Naive thymus-derived CD4-positive, alpha-beta T cell (primary cell): ENCODE measurements at regions of chr12 and their contacts with region 1.

Region 1: GRCh38 chr12:65556681-65557437 is 267.4 kb upstream of the HMGA2 start:
- DNase-seq: peak; percentile 4 to 59 (median 47)
- ATAC-seq: peak; percentile 86
- H3K4me3 ChIP-seq: no peak overlapping the region
- H3K4me3 Mint-ChIP-seq: no peak overlapping the region
- H3K27ac ChIP-seq: no peak overlapping the region
- H3K27ac Mint-ChIP-seq: no peak overlapping the region
- H3K4me1 ChIP-seq: no peaks in the 10 kb centered on the region
- H3K4me1 Mint-ChIP-seq: peaks cover 0 to 8% (median 6%) of the 10 kb centered on the region in 7 donors
- H3K27me3 ChIP-seq: peaks cover 5% of the 10 kb centered on the region in 2 donors
- H3K27me3 Mint-ChIP-seq: peaks cover 0 to 22% (median 19%) of the 10 kb centered on the region in 5 donors

Region 2: DNA sequence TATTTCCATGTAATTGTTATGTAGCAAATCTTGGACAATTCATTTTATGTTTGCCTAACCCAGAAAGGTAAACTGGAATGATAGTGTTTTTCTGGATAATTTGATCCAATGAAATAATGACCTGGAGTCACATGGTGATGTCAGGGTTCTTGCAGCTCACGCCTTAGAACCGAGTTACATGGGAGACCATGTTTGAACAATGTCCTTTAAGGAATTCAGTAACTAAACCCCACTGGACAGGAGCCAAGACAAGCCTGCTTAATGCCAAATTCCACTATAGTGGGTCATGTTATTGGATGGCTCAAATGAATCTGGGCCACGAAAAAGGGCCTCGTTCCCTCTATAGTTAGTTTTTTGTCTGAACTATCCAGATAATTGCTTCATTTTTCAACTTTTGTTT is 11.7 kb after region 1 on chr12:
- CTCF ChIA-PET with region 1: no interaction called
- POLR2A ChIA-PET with region 1: no interaction called
- intact Hi-C with region 1: no loop called
- DNase-seq: no peak
- ATAC-seq: no peak
- H3K4me3 ChIP-seq: no peak overlapping the region
- H3K4me3 Mint-ChIP-seq: no peak overlapping the region
- H3K27ac ChIP-seq: no peak overlapping the region
- H3K27ac Mint-ChIP-seq: no peak overlapping the region
- H3K4me1 ChIP-seq: no peaks in the 10 kb centered on the region
- H3K4me1 Mint-ChIP-seq: no peaks in the 10 kb centered on the region
- H3K27me3 ChIP-seq: no peaks in the 10 kb centered on the region
- H3K27me3 Mint-ChIP-seq: peaks cover 8 to 60% (median 41%) of the 10 kb centered on the region in 5 donors

Region 3: GRCh38 chr12:66087365-66087943 is 530.6 kb after region 1 on chr12:
- CTCF ChIA-PET with region 1: interaction called, 4 read pairs
- POLR2A ChIA-PET with region 1: no interaction called
- intact Hi-C with region 1: loop called (anchors 1 kb)
- DNase-seq: peak in 7 of 9 donors; percentile 9 to 42 (median 29)
- ATAC-seq: peak; percentile 72
- H3K4me3 ChIP-seq: no peak overlapping the region
- H3K4me3 Mint-ChIP-seq: no peak overlapping the region
- H3K27ac ChIP-seq: no peak overlapping the region
- H3K27ac Mint-ChIP-seq: no peak overlapping the region
- H3K4me1 ChIP-seq: no peaks in the 10 kb centered on the region
- H3K4me1 Mint-ChIP-seq: no peaks in the 10 kb centered on the region
- H3K27me3 ChIP-seq: peaks cover 0 to 5% of the 10 kb centered on the region in 2 donors
- H3K27me3 Mint-ChIP-seq: peaks cover 13 to 30% (median 27%) of the 10 kb centered on the region in 5 donors

Region 4: DNA sequence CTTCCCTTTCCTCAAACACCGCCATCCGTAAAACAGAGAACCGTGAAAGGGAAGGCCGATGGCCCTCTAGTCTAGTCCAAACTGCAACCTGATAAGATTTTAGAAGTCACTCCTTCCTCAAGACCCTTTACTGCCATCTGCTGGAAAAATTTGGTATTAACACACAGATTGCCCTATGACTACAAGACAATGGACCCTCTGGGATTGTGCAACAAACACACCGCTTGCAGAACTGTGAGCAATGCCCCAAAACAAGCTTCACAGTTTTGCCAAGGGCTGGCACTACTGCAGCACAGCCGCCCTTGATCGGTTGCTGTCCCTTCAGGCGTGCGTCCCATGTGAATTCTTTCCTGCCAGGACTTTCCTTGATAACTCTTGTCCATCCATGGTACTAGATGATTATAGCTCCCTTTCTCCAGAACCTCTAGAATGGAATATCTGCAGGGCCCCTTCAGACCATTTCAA is 550.6 kb after region 1 on chr12:
- CTCF ChIA-PET with region 1: no interaction called
- POLR2A ChIA-PET with region 1: no interaction called
- intact Hi-C with region 1: loop called (anchors 1 kb)
- DNase-seq: peak in 8 of 9 donors; percentile 37 to 78 (median 67)
- ATAC-seq: peak; percentile 93
- H3K4me3 ChIP-seq: no peak overlapping the region
- H3K4me3 Mint-ChIP-seq: no peak overlapping the region
- H3K27ac ChIP-seq: no peak overlapping the region
- H3K27ac Mint-ChIP-seq: no peak overlapping the region
- H3K4me1 ChIP-seq: no peaks in the 10 kb centered on the region
- H3K4me1 Mint-ChIP-seq: peaks cover 2 to 12% (median 4%) of the 10 kb centered on the region in 7 donors
- H3K27me3 ChIP-seq: no peaks in the 10 kb centered on the region
- H3K27me3 Mint-ChIP-seq: peaks cover 6 to 23% (median 20%) of the 10 kb centered on the region in 5 donors